Activated naive CD4-positive, alpha-beta T cell treated with anti-CD3 and anti-CD28 coated beads for 36 hours (primary cell): ENCODE measurements at regions of chr18 and their contacts with region 1.

Region 1: GRCh38 chr18:47150029-47150823 is at the start of gene HDHD2:
- DNase-seq: peak; percentile 83
- H3K4me3 Mint-ChIP-seq: peak within 1 kb of the TSS; percentile 95
- H3K27ac Mint-ChIP-seq: peak within 1 kb of the TSS; percentile 96
- H3K4me1 Mint-ChIP-seq: peaks cover 35% of the 10 kb centered on the region
- H3K27me3 Mint-ChIP-seq: no peaks in the 10 kb centered on the region
- total RNA-seq, gene HDHD2: 32.8 to 33.9 TPM

Region 2: DNA sequence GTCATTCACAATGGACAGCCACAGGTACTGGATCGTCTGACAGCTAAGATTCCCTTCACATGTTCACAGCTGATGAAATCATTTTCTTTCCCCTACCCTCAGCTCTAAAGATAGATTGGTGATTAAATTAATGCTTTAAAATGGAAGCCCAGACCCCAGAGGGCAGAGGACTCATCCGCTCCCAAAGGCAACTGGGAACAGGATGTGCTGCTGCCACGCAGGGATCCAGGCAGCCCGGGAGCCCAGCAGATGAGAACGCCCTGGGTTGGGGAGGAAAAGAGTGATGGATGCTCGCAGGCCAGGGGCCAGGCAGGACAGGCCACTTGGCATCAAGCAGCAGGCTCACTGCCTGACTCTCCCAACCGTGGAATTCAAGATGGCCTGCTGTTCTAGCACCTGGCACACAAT is 41.2 kb before region 1 on chr18:
- CTCF ChIA-PET with region 1: no interaction called
- intact Hi-C with region 1: no loop called
- DNase-seq: no peak
- H3K4me3 Mint-ChIP-seq: no peak overlapping the region
- H3K27ac Mint-ChIP-seq: no peak overlapping the region
- H3K4me1 Mint-ChIP-seq: no peaks in the 10 kb centered on the region
- H3K27me3 Mint-ChIP-seq: no peaks in the 10 kb centered on the region

Region 3: GRCh38 chr18:47175908-47176575 is 25.8 kb after region 1 on chr18 and contains the start of gene IER3IP1:
- CTCF ChIA-PET with region 1: interaction called, 3 read pairs
- intact Hi-C with region 1: loop called (anchors 1 kb)
- DNase-seq: peak; percentile 91
- H3K4me3 Mint-ChIP-seq: no peak within 1 kb of the TSS
- H3K27ac Mint-ChIP-seq: peak within 1 kb of the TSS; percentile 62
- H3K4me1 Mint-ChIP-seq: no peaks in the 10 kb centered on the region
- H3K27me3 Mint-ChIP-seq: no peaks in the 10 kb centered on the region
- total RNA-seq, gene IER3IP1: 9.7 to 10.0 TPM

Region 4: DNA sequence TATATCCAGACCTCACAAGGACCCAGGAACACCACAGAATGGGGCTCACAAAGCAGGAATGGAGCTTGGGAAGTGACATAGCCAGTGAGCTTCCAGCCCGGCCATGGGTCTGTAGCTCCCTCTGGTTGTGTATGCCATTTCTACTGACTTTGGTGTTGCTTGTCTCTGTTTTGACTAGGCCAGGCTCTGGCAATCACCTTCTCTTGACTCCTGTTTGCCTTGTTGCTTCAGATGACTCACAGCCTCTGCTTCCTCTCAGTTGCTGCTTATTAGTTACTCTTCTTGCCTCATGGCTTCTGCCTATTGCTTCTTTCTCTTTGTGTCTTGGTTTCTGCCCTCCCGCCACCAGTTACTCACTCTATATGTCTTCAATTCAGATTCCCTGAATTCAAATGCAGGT is 41.7 kb after region 1 on chr18:
- CTCF ChIA-PET with region 1: interaction called, 3 read pairs
- intact Hi-C with region 1: loop called (anchors 1 kb)
- DNase-seq: peak; percentile 21
- H3K4me3 Mint-ChIP-seq: no peak overlapping the region
- H3K27ac Mint-ChIP-seq: no peak overlapping the region
- H3K4me1 Mint-ChIP-seq: peaks cover 2% of the 10 kb centered on the region
- H3K27me3 Mint-ChIP-seq: peaks cover 15% of the 10 kb centered on the region

Region 5: DNA sequence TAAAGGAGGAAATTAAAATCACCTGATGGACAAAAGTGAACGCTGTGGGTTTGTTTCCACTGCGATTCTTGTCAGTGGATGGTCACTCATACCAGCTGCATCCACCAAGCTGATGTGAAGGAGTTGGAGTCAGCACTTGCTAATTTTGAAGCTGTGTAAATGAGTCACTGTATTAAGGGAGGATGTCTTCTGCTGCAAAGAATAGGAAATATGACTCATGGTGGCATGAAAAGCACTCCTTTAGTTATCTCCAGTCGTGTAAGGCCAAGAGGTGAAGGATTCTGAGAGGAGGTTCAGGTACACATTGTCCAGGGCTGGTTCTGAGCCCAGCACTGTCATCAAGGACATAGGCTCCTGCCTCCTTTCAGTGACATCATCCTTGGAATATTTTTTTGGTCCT is 172.9 kb after region 1 on chr18:
- CTCF ChIA-PET with region 1: no interaction called
- intact Hi-C with region 1: no loop called
- DNase-seq: no peak
- H3K4me3 Mint-ChIP-seq: no peak overlapping the region
- H3K27ac Mint-ChIP-seq: no peak overlapping the region
- H3K4me1 Mint-ChIP-seq: peaks cover 9% of the 10 kb centered on the region
- H3K27me3 Mint-ChIP-seq: no peaks in the 10 kb centered on the region

Region 6: GRCh38 chr18:47669815-47670214 is 519.6 kb after region 1 on chr18:
- CTCF ChIA-PET with region 1: no interaction called
- intact Hi-C with region 1: no loop called
- DNase-seq: no peak
- H3K4me3 Mint-ChIP-seq: no peak overlapping the region
- H3K27ac Mint-ChIP-seq: no peak overlapping the region
- H3K4me1 Mint-ChIP-seq: no peaks in the 10 kb centered on the region
- H3K27me3 Mint-ChIP-seq: peaks cover 28% of the 10 kb centered on the region